ENCODE measurements at regions of chr17 and their contacts with region 1.

Region 1: DNA sequence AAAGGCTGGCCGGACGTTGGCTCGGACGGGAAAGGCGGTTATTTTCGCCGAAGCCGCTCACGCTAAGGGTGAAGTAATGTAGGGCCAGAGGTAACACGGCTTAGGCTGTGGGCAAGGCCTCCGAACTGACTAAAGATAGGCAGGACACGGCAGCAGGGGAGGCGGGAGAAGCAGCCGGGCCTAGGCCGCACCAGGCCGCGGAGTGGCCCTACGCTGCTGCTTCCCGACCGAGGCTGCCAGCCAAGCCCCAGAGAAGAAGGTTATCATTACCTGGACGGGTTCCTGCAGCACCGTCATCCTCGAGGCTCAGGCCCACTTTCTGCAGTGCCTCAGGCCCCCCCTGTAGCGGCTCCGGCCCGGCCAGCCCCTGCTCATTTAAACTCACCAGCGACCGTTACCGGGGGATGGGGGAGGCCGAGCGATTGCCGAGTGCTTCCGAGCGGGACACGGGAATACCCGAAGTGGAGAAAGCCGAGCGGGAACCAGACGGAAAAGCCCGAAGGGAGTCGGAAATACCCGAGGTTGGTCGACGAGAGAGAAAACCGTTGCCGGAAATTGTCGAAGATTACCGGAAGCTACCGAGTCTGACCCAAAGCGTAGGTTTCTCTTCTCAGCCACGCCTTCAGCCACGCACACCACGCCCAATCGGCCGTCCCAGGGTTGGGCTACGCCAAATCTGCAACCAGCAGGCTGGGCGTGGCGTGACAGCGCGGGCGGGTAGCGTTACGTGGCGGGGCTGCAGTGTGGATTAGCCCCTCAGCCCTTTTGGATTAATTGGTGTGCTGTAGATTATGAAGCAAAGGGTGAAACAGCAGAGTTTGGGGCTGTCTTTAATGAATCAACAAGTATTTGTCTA is at the start of gene CDC27:
- DNase-seq: peak; percentile 98
- H3K4me3 ChIP-seq: peak within 1 kb of the TSS; percentile 57 to 97 (median 82)
- H3K27ac ChIP-seq: peak within 1 kb of the TSS; percentile 79
- H3K4me1 ChIP-seq: peaks cover 25% of the 10 kb centered on the region
- H3K27me3 ChIP-seq: no peaks in the 10 kb centered on the region
- CTCF ChIP-seq: no peak
- POLR2A ChIP-seq: peak; percentile 72
- total RNA-seq, gene CDC27: 172 and 179 TPM in 2 replicates

Region 2: GRCh38 chr17:46097497-46097896 is 1091.6 kb before region 1 on chr17:
- CTCF ChIA-PET with region 1: no interaction called
- POLR2A ChIA-PET with region 1: no interaction called
- dilution Hi-C with region 1: no loop called
- intact Hi-C with region 1: no loop called
- DNase-seq: no peak
- H3K4me3 ChIP-seq: no peak overlapping the region
- H3K27ac ChIP-seq: no peak overlapping the region
- H3K4me1 ChIP-seq: peaks cover 24% of the 10 kb centered on the region
- H3K27me3 ChIP-seq: no peaks in the 10 kb centered on the region
- CTCF ChIP-seq: no peak
- POLR2A ChIP-seq: no peak

Region 3: DNA sequence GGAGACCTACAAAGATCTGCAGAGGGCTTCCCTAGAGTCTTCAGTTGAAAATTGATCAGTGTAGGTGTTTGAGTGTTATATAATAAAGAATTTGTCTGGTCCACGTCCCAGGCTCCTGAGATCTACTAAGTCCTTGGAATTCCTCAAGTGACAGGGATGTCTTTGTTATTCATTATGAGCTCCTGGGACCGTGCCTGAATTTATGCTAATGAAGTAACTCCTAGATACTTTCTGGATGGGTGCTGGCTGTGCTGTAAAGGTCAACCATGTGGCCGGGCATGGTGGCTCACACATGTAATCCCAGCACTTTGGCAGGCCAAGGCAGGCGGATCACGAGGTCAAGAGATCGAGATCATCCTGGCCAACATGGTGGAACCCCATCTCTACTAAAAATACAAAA is 43.8 kb before region 1 on chr17:
- CTCF ChIA-PET with region 1: no interaction called
- POLR2A ChIA-PET with region 1: no interaction called
- dilution Hi-C with region 1: no loop called
- intact Hi-C with region 1: loop called (anchors 1 kb)
- DNase-seq: no peak
- H3K4me3 ChIP-seq: no peak overlapping the region
- H3K27ac ChIP-seq: no peak overlapping the region
- H3K4me1 ChIP-seq: no peaks in the 10 kb centered on the region
- H3K27me3 ChIP-seq: no peaks in the 10 kb centered on the region
- CTCF ChIP-seq: no peak
- POLR2A ChIP-seq: no peak

Region 4: DNA sequence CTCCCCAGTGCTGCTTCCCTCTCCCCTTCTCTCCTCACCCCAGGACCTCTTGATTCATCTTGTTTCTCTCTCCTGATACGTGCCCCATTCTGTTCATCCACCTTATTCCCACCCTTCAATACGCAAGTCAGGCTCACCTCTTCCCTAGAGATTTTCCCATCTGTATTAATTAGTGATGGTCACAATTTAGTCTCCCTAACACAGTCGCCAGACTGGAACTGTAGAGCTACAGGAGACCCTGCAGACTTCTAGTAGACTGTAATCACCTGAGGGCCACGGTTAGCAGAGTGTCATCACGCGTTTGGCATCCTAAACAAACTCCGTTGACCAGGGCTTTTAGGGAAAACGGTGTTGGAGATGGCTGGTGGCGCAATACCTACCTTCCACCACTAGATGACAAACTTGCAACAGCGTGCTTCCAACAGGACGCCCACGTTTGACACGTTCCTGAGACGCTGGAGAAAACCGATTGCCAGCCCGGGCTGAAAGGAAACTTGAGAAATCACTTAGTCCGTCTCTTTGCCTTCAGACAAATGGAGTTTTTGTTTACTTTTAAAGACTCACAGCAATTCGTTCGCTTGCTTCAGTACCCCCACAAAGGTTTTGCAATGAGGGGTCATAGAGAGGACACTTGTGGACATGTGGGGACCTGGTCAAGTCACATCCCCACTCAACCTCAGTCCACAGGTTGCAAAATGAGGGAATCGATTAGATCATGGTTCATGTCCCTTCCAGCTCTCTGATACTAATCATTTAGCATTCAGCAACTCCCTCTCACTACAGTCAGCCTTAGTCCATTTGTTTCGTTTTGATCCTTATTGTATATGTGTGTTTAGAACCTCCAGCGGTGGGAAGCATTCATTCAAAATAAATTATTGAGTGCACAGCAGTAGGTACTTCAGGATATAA is 40.7 kb after region 1 on chr17:
- CTCF ChIA-PET with region 1: no interaction called
- POLR2A ChIA-PET with region 1: interaction called, 5 read pairs
- dilution Hi-C with region 1: no loop called
- intact Hi-C with region 1: loop called (anchors 1 kb)
- DNase-seq: peak; percentile 93
- H3K4me3 ChIP-seq: no peak overlapping the region
- H3K27ac ChIP-seq: peak overlapping the region; percentile 38
- H3K4me1 ChIP-seq: peaks cover 30% of the 10 kb centered on the region
- H3K27me3 ChIP-seq: no peaks in the 10 kb centered on the region
- CTCF ChIP-seq: peak; percentile 98 to 99
- POLR2A ChIP-seq: peak; percentile 55

Region 5: GRCh38 chr17:47253541-47254402 is 64.7 kb after region 1 on chr17 and contains the start of gene ITGB3:
- CTCF ChIA-PET with region 1: no interaction called
- POLR2A ChIA-PET with region 1: no interaction called
- dilution Hi-C with region 1: no loop called
- intact Hi-C with region 1: loop called (anchors 2 kb)
- DNase-seq: peak; percentile 83
- H3K4me3 ChIP-seq: peak within 1 kb of the TSS; percentile 61 to 87 (median 68)
- H3K27ac ChIP-seq: peak within 1 kb of the TSS; percentile 37
- H3K4me1 ChIP-seq: peaks cover 38% of the 10 kb centered on the region
- H3K27me3 ChIP-seq: no peaks in the 10 kb centered on the region
- CTCF ChIP-seq: peak; percentile 55 to 66
- POLR2A ChIP-seq: peak; percentile 60
- total RNA-seq, gene ITGB3: 49.9 and 60.0 TPM in 2 replicates

Region 6: GRCh38 chr17:47323382-47324222 is 134.5 kb after region 1 on chr17 and contains the start of gene EFCAB13:
- CTCF ChIA-PET with region 1: no interaction called
- POLR2A ChIA-PET with region 1: no interaction called
- dilution Hi-C with region 1: no loop called
- intact Hi-C with region 1: loop called (anchors 2 kb)
- DNase-seq: peak; percentile 94
- H3K4me3 ChIP-seq: peak within 1 kb of the TSS; percentile 71 to 89 (median 73)
- H3K27ac ChIP-seq: peak within 1 kb of the TSS; percentile 53
- H3K4me1 ChIP-seq: peaks cover 15% of the 10 kb centered on the region
- H3K27me3 ChIP-seq: no peaks in the 10 kb centered on the region
- CTCF ChIP-seq: peak in 1 of 2 donors; percentile 13
- POLR2A ChIP-seq: peak; percentile 95
- total RNA-seq, gene EFCAB13: 8.3 and 12.9 TPM in 2 replicates